MCF 10A (cell line): ENCODE measurements at regions of chr4 and their contacts with region 1.

Region 1: DNA sequence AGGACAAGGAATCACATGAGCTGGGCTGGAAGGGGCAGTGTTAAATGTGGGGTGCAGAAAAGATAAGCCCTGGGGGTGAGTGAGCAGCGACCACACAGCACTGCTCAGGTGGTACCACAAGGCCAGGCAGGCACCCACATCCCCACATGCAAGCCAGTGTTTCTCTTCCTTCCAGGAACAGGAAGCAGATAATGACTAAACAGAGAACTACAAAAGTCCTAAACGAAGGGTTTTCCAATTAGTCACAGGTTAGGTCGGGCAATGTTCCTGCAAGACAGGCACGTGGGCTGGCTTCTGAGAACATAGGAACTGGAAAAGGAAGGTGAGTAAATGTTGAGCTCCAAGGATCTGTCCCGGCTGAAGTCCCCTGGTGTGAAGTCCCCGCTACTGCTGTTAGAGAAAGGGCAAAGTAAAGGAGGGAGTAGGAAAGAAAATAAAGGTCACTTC is 19.5 kb downstream of the RELL1 start:
- DNase-seq: peak; percentile 95
- H3K4me3 Mint-ChIP-seq: peak overlapping the region; percentile 63
- H3K27ac Mint-ChIP-seq: peak overlapping the region; percentile 97
- H3K4me1 Mint-ChIP-seq: peaks cover 37% of the 10 kb centered on the region
- H3K27me3 Mint-ChIP-seq: no peaks in the 10 kb centered on the region
- CTCF ChIP-seq: no peak

Region 2: DNA sequence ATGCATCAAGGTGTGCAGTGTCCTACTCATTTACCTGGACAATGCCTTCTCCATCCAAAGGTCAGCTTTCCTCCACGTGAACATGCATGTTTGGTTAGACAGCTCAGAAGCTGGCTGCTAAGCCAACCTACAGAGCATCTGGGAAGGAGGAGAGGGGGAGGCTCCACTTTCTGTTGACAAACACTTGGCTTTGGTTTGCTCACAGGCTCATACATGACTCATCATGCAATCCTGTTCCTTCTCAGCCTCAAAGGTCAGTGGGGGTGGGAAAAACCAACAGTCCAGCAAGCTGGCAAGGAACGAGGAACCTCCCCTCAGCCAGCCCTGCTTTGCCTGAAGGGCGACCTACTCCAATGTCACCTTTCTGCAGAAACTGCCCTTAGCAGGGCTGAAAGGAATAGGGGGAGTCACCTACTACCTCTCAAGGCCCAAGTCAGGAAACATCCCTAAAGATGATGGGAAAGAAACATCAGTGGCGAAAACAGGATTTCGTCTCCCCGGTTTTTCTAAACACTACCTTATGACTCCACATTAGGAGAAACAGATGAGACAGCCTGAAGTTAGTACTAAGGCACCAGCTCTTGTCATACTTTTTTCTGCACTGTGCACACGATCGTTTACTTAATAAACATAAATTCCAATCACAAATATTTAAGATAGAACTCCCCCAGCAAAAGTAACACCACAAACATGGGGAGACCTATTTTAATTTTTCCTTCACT is 18.4 kb before region 1 on chr4:
- CTCF ChIA-PET with region 1: interaction called, 6 read pairs
- POLR2A ChIA-PET with region 1: interaction called, 16 read pairs
- intact Hi-C with region 1: no loop called
- DNase-seq: peak; percentile 97
- H3K4me3 Mint-ChIP-seq: peak overlapping the region; percentile 52
- H3K27ac Mint-ChIP-seq: peak overlapping the region; percentile 81
- H3K4me1 Mint-ChIP-seq: peaks cover 5% of the 10 kb centered on the region
- H3K27me3 Mint-ChIP-seq: no peaks in the 10 kb centered on the region
- CTCF ChIP-seq: no peak

Region 3: DNA sequence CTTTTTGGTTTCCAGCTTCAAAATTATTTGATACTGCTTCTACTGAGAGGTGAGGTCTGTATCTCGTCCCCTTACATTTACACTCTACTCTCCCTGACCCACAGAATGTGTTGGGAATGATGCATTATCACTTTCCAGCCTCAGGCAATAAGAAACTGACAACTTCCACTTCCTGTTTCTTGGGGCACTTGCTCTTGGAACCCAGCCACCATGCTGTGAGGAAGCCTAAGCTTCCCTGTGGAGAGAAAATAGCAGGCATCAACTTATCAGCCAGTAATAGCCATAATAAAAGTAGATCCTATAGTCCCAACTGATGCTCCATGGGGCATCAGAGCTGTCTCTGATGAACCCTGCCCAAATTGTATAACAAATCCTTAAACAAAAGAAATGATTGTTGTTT is 13.0 kb before region 1 on chr4:
- CTCF ChIA-PET with region 1: interaction called, 6 read pairs
- POLR2A ChIA-PET with region 1: interaction called, 19 read pairs
- intact Hi-C with region 1: no loop called
- DNase-seq: peak; percentile 66
- H3K4me3 Mint-ChIP-seq: no peak overlapping the region
- H3K27ac Mint-ChIP-seq: no peak overlapping the region
- H3K4me1 Mint-ChIP-seq: peaks cover 11% of the 10 kb centered on the region
- H3K27me3 Mint-ChIP-seq: no peaks in the 10 kb centered on the region
- CTCF ChIP-seq: no peak

Region 4: GRCh38 chr4:37864786-37865185 is 198.1 kb after region 1 on chr4:
- CTCF ChIA-PET with region 1: no interaction called
- POLR2A ChIA-PET with region 1: no interaction called
- intact Hi-C with region 1: no loop called
- DNase-seq: no peak
- H3K4me3 Mint-ChIP-seq: no peak overlapping the region
- H3K27ac Mint-ChIP-seq: no peak overlapping the region
- H3K4me1 Mint-ChIP-seq: no peaks in the 10 kb centered on the region
- H3K27me3 Mint-ChIP-seq: no peaks in the 10 kb centered on the region
- CTCF ChIP-seq: no peak

Region 5: GRCh38 chr4:37994569-37994968 is 327.9 kb after region 1 on chr4:
- CTCF ChIA-PET with region 1: no interaction called
- POLR2A ChIA-PET with region 1: no interaction called
- intact Hi-C with region 1: no loop called
- DNase-seq: no peak
- H3K4me3 Mint-ChIP-seq: no peak overlapping the region
- H3K27ac Mint-ChIP-seq: no peak overlapping the region
- H3K4me1 Mint-ChIP-seq: no peaks in the 10 kb centered on the region
- H3K27me3 Mint-ChIP-seq: no peaks in the 10 kb centered on the region
- CTCF ChIP-seq: no peak